ENCODE measurements at regions of chr6 and their contacts with region 1.

Region 1: DNA sequence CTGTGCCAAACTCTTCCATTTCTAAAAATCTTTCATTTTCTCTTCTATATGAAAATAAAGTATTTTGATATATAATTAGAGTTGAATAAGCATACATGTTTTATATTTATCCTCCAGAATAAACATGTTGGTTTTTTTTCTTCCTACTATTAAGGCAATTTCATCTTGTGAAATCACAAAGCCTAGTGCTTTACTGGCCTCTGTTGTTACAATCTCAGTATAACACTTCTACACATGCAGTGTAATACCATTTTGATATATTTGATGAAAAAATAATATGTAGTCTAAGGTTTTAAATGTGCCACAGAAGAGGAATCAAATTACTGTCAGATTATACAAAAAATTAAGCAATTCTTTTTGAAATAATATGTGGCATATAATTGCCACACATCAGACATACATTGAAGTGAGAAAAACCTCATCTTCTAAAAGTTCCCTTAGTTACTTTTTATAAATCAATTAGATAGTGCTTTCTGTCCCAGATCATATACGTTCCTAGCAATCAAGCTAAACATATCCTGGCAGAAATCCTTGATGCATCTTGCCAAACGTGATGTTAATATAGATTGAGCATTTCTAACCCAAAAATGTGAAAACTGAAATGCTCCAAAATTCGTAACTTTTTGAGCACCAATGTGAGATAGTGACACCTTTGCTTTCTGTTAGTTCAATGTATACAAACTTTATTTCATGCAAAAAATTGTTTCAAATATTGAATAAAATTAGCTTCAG is 225.1 kb upstream of the MANEA start:
- DNase-seq: no peak
- H3K4me3 ChIP-seq: no peak overlapping the region
- H3K27ac ChIP-seq: no peak overlapping the region
- H3K4me1 ChIP-seq: no peaks in the 10 kb centered on the region
- H3K27me3 ChIP-seq: no peaks in the 10 kb centered on the region
- CTCF ChIP-seq: no peak
- POLR2A ChIP-seq: no peak

Region 2: DNA sequence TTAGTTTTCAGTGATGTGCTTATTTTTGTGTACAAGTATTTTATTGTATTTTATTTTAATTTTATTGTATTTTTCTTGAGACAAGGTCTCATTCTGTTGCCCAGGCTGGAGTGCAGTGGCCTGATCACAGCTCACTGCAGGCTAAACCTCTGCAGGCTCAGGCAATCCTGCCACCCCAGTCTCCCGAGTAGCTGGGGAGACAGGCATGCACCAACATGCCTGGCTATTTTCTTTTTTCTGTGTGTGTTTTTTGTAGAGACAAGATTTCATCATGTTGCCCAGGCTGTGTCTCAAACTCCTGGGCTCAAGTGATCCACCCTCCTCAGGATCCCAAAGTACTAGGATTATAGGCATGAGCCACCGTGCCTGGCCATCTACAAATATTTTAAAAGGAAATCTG is 371.4 kb after region 1 on chr6:
- intact Hi-C with region 1: loop called (anchors 10 kb)
- DNase-seq: no peak
- H3K4me3 ChIP-seq: no peak overlapping the region
- H3K27ac ChIP-seq: no peak overlapping the region
- H3K4me1 ChIP-seq: no peaks in the 10 kb centered on the region
- H3K27me3 ChIP-seq: no peaks in the 10 kb centered on the region
- CTCF ChIP-seq: no peak
- POLR2A ChIP-seq: no peak